Activated naive CD4-positive, alpha-beta T cell treated with anti-CD3 and anti-CD28 coated beads for 36 hours (primary cell): ENCODE measurements at regions of chr13 and their contacts with region 1.

Region 1: DNA sequence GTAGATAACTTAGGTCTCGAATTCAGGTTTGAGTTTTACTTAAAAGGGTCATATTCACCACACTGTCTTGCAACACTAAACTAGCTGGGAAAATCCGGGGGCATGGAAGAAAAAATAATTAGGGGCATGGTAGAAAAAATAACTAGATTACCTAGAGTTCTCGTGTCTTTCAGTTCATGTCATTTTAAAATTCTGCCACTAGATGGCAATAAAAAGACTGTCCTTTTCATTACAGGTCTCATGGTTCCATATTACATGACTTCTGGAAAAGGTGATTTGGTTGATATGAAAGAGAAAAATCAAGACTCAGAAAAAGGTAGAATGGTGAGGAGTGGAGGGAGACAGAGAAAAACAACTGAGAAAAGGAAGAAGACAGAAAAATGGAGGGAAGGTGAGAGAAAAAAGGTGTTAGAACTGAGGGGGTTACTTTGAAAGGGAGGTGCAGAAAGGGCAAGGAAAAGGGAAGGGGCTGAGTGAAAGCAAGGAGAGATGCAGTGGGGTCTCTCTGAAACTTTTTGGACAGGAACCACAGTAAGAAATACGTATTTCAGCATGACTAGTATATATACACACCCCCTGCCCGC is 299.0 kb downstream of the KLF12 start:
- DNase-seq: no peak
- H3K4me3 Mint-ChIP-seq: no peak overlapping the region
- H3K27ac Mint-ChIP-seq: no peak overlapping the region
- H3K4me1 Mint-ChIP-seq: peaks cover 47% of the 10 kb centered on the region
- H3K27me3 Mint-ChIP-seq: no peaks in the 10 kb centered on the region

Region 2: DNA sequence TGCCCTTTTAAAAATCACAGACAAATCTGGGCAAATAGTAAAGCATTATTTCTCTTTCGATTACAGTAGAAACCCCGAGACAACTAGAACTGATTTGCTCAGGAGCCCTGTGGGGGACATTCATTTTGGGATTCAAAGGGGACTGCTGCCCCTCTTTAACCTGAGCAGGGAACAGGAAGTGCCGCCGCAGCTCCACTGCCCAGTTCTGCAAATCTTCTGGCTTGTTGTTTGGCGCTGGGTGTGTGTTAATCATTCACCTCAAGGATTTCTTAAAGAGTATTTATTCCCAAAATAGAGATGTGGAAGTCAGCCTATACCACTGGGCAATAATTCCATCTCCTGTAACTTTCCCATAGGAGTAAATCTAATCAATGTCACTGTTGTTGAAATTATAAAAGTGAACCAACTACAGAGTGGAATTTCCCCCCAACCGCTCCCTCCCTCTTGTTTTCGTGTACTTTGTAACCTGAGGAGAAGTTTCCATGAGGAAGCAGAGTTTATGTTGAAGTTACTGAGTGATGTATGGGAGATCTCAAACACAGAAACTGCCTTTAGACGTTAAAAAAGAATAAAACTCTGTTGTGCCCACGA is 216.9 kb before region 1 on chr13:
- CTCF ChIA-PET with region 1: no interaction called
- intact Hi-C with region 1: no loop called
- DNase-seq: no peak
- H3K4me3 Mint-ChIP-seq: no peak overlapping the region
- H3K27ac Mint-ChIP-seq: no peak overlapping the region
- H3K4me1 Mint-ChIP-seq: peaks cover 10% of the 10 kb centered on the region
- H3K27me3 Mint-ChIP-seq: no peaks in the 10 kb centered on the region

Region 3: DNA sequence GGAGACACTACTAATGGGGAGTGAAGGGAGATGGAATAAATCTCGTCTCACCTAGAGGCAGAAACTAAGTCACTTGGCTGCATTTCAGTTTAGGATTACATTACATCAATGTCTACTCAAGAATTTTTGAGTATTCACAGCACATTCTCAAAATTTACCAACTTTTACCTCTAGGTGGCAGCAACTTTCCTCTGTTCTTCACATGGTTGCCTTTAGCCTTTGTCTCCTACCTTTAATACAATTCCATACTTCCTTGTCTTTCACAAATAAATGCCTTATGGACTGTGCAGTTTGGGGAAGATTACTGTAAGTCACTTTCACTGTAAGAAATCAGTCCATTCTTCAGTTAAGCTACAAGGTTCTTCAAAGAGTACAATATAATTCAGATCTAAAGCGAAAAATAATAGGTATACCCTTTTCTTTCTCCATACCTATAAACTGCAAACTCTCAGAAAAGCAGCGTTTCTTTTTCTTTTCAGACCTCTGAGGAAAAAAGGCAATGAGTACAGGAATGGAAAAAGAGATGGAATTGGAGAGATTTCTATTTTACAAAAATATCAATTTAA is 80.4 kb before region 1 on chr13:
- CTCF ChIA-PET with region 1: interaction called, 3 read pairs
- intact Hi-C with region 1: loop called (anchors 2 kb)
- DNase-seq: peak; percentile 20
- H3K4me3 Mint-ChIP-seq: no peak overlapping the region
- H3K27ac Mint-ChIP-seq: no peak overlapping the region
- H3K4me1 Mint-ChIP-seq: peaks cover 33% of the 10 kb centered on the region
- H3K27me3 Mint-ChIP-seq: no peaks in the 10 kb centered on the region

Region 4: GRCh38 chr13:73861136-73861535 is 25.9 kb after region 1 on chr13:
- CTCF ChIA-PET with region 1: interaction called, 10 read pairs
- intact Hi-C with region 1: no loop called
- DNase-seq: no peak
- H3K4me3 Mint-ChIP-seq: no peak overlapping the region
- H3K27ac Mint-ChIP-seq: peak overlapping the region; percentile 33
- H3K4me1 Mint-ChIP-seq: peaks cover 43% of the 10 kb centered on the region
- H3K27me3 Mint-ChIP-seq: no peaks in the 10 kb centered on the region

Region 5: GRCh38 chr13:73998631-73999030 is 163.4 kb after region 1 on chr13:
- CTCF ChIA-PET with region 1: interaction called, 3 read pairs
- intact Hi-C with region 1: loop called (anchors 1 kb)
- DNase-seq: no peak
- H3K4me3 Mint-ChIP-seq: no peak overlapping the region
- H3K27ac Mint-ChIP-seq: no peak overlapping the region
- H3K4me1 Mint-ChIP-seq: peaks cover 52% of the 10 kb centered on the region
- H3K27me3 Mint-ChIP-seq: no peaks in the 10 kb centered on the region

Region 6: DNA sequence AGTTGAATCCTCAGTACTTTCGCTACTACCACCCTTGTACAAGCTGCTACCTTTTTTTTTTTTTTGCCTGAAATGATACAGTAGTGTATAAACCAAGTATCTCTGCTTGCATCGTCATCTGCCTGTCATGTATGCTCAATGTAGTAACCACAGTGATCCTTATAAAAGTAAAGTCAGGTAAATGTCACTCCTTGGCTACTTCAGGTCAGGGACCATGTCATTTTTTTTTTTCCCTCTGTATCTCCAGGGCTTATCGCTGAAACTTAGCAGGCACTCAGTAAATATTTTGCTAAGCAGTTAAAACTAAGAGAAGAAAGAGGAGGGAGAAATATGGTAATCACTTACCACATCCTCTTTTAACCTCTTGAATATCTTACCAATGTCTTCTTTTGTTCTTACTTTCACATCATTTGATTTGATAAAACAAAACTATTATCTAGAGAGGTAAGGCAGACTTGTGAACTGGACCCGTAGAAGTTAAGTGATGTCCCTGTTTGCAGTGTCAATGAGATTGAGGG is 395.8 kb after region 1 on chr13:
- CTCF ChIA-PET with region 1: no interaction called
- intact Hi-C with region 1: loop called (anchors 5 kb)
- DNase-seq: no peak
- H3K4me3 Mint-ChIP-seq: peak overlapping the region; percentile 52
- H3K27ac Mint-ChIP-seq: peak overlapping the region; percentile 65
- H3K4me1 Mint-ChIP-seq: peaks cover 40% of the 10 kb centered on the region
- H3K27me3 Mint-ChIP-seq: no peaks in the 10 kb centered on the region

Region 7: GRCh38 chr13:75219479-75220237 is 1384.4 kb after region 1 on chr13:
- CTCF ChIA-PET with region 1: interaction called, 3 read pairs
- intact Hi-C with region 1: loop called (anchors 2 kb)
- DNase-seq: peak; percentile 89
- H3K4me3 Mint-ChIP-seq: peak overlapping the region; percentile 17
- H3K27ac Mint-ChIP-seq: no peak overlapping the region
- H3K4me1 Mint-ChIP-seq: peaks cover 3% of the 10 kb centered on the region
- H3K27me3 Mint-ChIP-seq: peaks cover 31% of the 10 kb centered on the region